ENCODE measurements at regions of chr13 and their contacts with region 1.

Region 1: DNA sequence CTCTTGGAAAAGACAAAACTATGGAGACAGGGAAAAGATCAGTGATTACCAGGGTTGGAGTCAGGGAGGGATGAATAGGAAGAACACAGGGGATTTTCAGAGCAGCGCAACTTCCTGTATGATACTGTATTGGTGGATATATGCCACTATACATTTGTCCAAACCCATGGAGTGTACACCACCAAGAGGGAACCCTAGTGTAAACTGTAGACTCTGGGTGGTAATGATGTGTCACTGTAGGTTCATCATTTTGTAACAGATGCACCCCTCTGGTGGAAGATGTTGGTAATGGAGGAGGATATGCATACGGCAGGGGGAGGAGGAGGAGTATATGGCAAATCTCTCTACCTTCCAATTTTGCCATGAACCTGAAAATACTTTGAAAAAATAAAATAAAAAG is 68.1 kb downstream of the UFM1 start:
- DNase-seq: peak; percentile 73
- ATAC-seq: peak; percentile 87
- H3K4me3 ChIP-seq: 0 out of 2 replicates have a peak overlapping the region, but pooled peaks have one; percentile 20
- H3K27ac ChIP-seq: peak overlapping the region; percentile 72
- H3K4me1 ChIP-seq: peaks cover 16% of the 10 kb centered on the region
- H3K27me3 ChIP-seq: no peaks in the 10 kb centered on the region
- CTCF ChIP-seq: peak; percentile 73

Region 2: GRCh38 chr13:38366954-38367645 is 50.6 kb before region 1 on chr13:
- CTCF ChIA-PET with region 1: no interaction called
- POLR2A ChIA-PET with region 1: no interaction called
- intact Hi-C with region 1: loop called (anchors 2 kb)
- DNase-seq: peak; percentile 79
- ATAC-seq: peak; percentile 95
- H3K4me3 ChIP-seq: peak overlapping the region; percentile 21; the same call in 1 of the 2 replicates
- H3K27ac ChIP-seq: peak overlapping the region; percentile 97
- H3K4me1 ChIP-seq: peaks cover 22% of the 10 kb centered on the region
- H3K27me3 ChIP-seq: no peaks in the 10 kb centered on the region
- CTCF ChIP-seq: no peak